ENCODE measurements at regions of chr21 and their contacts with region 1.

Region 1: GRCh38 chr21:39183237-39184007 is at the start of gene PSMG1:
- DNase-seq: peak; percentile 92
- H3K4me3 Mint-ChIP-seq: peak within 1 kb of the TSS; percentile 99
- H3K27ac Mint-ChIP-seq: peak within 1 kb of the TSS; percentile 98
- H3K4me1 Mint-ChIP-seq: peaks cover 57% of the 10 kb centered on the region
- H3K27me3 Mint-ChIP-seq: no peaks in the 10 kb centered on the region
- total RNA-seq, gene PSMG1: 79.7 and 85.2 TPM in 2 replicates

Region 2: GRCh38 chr21:38831526-38832467 is 351.6 kb before region 1 on chr21:
- intact Hi-C with region 1: loop called (anchors 10 kb)
- DNase-seq: peak; percentile 59
- H3K4me3 Mint-ChIP-seq: no peak overlapping the region
- H3K27ac Mint-ChIP-seq: peak overlapping the region; percentile 50
- H3K4me1 Mint-ChIP-seq: peaks cover 16% of the 10 kb centered on the region
- H3K27me3 Mint-ChIP-seq: no peaks in the 10 kb centered on the region

Region 3: GRCh38 chr21:39004634-39005501 is 178.6 kb before region 1 on chr21:
- intact Hi-C with region 1: loop called (anchors 10 kb)
- DNase-seq: no peak
- H3K4me3 Mint-ChIP-seq: peak overlapping the region; percentile 59
- H3K27ac Mint-ChIP-seq: peak overlapping the region; percentile 96
- H3K4me1 Mint-ChIP-seq: peaks cover 51% of the 10 kb centered on the region
- H3K27me3 Mint-ChIP-seq: no peaks in the 10 kb centered on the region

Region 4: GRCh38 chr21:39313571-39314142 is 130.2 kb after region 1 on chr21 and contains the start of gene BRWD1:
- intact Hi-C with region 1: loop called (anchors 1 kb)
- DNase-seq: peak; percentile 83
- H3K4me3 Mint-ChIP-seq: peak within 1 kb of the TSS; percentile 93
- H3K27ac Mint-ChIP-seq: peak within 1 kb of the TSS; percentile 98
- H3K4me1 Mint-ChIP-seq: peaks cover 31% of the 10 kb centered on the region
- H3K27me3 Mint-ChIP-seq: no peaks in the 10 kb centered on the region
- total RNA-seq, gene BRWD1: 34.8 and 36.0 TPM in 2 replicates

Region 5: GRCh38 chr21:39349211-39350093 is 166.0 kb after region 1 on chr21:
- intact Hi-C with region 1: loop called (anchors 2 kb)
- DNase-seq: peak; percentile 97
- H3K4me3 Mint-ChIP-seq: peak overlapping the region; percentile 99
- H3K27ac Mint-ChIP-seq: peak overlapping the region; percentile 100
- H3K4me1 Mint-ChIP-seq: peaks cover 32% of the 10 kb centered on the region
- H3K27me3 Mint-ChIP-seq: peaks cover 4% of the 10 kb centered on the region

Region 6: GRCh38 chr21:39388038-39388810 is 204.8 kb after region 1 on chr21:
- intact Hi-C with region 1: loop called (anchors 1 kb)
- DNase-seq: peak; percentile 81
- H3K4me3 Mint-ChIP-seq: peak overlapping the region; percentile 84
- H3K27ac Mint-ChIP-seq: peak overlapping the region; percentile 87
- H3K4me1 Mint-ChIP-seq: peaks cover 20% of the 10 kb centered on the region
- H3K27me3 Mint-ChIP-seq: no peaks in the 10 kb centered on the region

Region 7: DNA sequence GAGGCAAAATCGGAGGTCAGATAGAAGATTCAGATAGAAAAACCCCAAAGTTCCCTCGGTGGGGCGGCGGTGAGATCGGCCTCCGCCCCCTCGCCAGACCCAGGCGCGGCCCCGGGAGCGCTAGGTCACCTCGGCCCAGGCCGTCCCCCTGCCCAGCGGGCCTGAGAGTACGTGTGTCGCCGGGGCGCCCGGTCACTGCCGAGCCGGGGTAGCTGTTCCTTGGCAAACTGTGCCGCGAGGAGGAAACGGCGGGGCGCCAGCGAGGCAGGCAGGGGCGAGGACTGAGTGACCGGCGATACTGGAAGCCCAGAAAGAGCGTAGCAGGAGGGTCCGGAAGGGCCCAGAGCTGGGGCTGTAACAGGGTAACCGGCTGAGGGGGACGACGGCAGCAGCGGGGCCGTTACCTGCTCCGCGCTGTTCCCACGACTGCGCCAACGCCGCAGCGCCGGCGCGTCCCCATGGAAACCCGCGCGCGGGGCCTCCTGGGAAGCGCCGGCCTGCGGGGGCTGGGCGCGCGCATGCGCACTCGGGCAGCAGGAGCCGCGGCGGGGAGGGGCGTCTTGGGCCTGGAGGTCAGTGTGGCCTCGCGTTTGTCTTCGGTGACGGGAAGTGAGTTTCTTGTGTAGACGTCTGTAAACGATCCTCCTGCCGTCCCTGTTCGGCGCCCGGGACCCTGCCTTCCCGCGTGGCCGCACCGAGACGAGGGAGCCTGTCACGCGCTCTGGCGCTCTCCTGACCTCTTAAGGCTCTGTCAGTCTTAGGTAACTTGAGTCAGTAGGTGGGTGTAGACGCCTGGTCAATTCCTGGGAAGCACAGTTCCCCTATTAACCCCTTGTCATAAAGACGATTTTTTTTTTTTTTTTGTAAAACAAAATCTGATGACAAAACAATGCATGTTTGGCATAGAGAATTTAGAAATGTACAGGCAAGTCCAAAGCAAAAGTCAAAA is 262.2 kb after region 1 on chr21 and contains the start of gene LCA5L:
- intact Hi-C with region 1: loop called (anchors 5 kb)
- DNase-seq: peak; percentile 88
- H3K4me3 Mint-ChIP-seq: peak within 1 kb of the TSS; percentile 89
- H3K27ac Mint-ChIP-seq: peak within 1 kb of the TSS; percentile 88
- H3K4me1 Mint-ChIP-seq: peaks cover 12% of the 10 kb centered on the region
- H3K27me3 Mint-ChIP-seq: peaks cover 40% of the 10 kb centered on the region
- total RNA-seq, gene LCA5L: 0.32 TPM in 1 of 2 replicates, not detected in the other

Measured in activated T-helper 2 cell treated with anti-CD3 and anti-CD28 coated beads, Interferon-gamma antibody, Interleukin-2, Interleukin-4, amounts not matched to agents 10 μg/mL and 5 μg/mL and 100 μg/mL, durations not matched to agents 14 hours and 24 hours and 36 hours (primary cell).